ENCODE measurements at regions of chr6 and their contacts with region 1.

Region 1: GRCh38 chr6:27295301-27296081 is 16.6 kb downstream of the POM121L2 start:
- DNase-seq: no peak
- ATAC-seq: no peak
- H3K4me3 Mint-ChIP-seq: no peak overlapping the region
- H3K27ac Mint-ChIP-seq: no peak overlapping the region
- H3K4me1 Mint-ChIP-seq: peaks cover 11% of the 10 kb centered on the region
- H3K27me3 Mint-ChIP-seq: peaks cover 72% of the 10 kb centered on the region

Region 2: DNA sequence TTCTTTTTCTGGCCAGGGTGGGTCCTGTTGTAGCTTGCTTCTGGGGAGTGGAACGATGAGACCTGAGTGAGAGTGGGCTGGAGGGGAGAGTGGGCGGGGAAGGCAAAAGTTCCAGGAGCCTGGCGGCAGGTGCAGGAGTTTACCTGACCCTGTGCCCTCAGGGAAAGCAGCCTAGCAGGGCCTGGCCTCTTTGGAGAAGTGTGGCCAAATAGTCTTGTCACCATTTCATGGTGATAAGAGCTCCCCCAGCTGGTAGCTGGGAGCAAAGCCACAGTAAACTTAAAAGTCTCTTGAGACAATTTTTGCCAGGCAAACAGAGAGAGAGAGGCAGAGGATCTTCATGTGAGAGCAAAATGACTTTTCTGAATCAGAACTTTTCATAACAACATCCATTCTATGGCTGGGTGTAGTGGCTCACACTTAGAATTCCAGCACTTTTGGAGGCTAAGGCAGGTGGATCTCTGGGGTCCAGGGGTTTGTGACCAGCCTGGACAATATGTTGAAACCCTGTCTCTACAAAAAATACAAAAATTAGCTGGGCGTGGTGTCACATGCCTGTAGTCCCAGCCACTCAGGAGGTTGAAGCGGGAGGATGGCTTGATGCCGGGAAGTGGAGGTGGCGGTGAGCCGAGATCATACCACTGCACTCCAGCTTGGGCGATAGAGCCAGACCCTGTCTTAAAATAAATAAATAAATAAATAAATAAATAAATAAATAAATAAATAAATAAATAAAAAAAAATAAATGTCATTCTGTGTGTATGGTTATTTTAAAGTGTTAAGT is 1805.3 kb before region 1 on chr6:
- CTCF ChIA-PET with region 1: no interaction called
- POLR2A ChIA-PET with region 1: no interaction called
- intact Hi-C with region 1: no loop called
- DNase-seq: peak; percentile 81
- ATAC-seq: peak; percentile 86
- H3K4me3 Mint-ChIP-seq: no peak overlapping the region
- H3K27ac Mint-ChIP-seq: no peak overlapping the region
- H3K4me1 Mint-ChIP-seq: peaks cover 4% of the 10 kb centered on the region
- H3K27me3 Mint-ChIP-seq: no peaks in the 10 kb centered on the region

Region 3: DNA sequence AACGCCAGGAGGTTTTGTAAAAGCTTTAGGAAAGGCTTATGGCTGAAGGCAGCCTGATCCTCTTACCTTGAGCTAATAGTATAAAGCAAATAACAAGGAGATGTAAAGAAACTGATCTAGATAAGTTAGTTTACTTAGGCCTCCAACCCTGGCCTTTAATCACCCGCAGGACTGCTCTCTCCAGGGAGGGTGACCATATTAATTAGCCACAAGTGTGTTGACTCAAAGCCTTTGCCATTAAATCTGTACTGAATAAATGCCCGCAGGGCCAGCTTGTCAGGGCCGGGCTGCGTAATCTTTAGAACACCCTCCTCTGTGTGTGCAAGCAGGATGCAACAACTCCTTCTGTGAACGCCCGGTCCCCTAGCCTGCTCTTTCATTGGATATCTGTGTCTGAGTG is 54.0 kb before region 1 on chr6:
- CTCF ChIA-PET with region 1: no interaction called
- POLR2A ChIA-PET with region 1: no interaction called
- intact Hi-C with region 1: no loop called
- DNase-seq: no peak
- ATAC-seq: no peak
- H3K4me3 Mint-ChIP-seq: no peak overlapping the region
- H3K27ac Mint-ChIP-seq: no peak overlapping the region
- H3K4me1 Mint-ChIP-seq: peaks cover 17% of the 10 kb centered on the region
- H3K27me3 Mint-ChIP-seq: peaks cover 55% of the 10 kb centered on the region

Region 4: DNA sequence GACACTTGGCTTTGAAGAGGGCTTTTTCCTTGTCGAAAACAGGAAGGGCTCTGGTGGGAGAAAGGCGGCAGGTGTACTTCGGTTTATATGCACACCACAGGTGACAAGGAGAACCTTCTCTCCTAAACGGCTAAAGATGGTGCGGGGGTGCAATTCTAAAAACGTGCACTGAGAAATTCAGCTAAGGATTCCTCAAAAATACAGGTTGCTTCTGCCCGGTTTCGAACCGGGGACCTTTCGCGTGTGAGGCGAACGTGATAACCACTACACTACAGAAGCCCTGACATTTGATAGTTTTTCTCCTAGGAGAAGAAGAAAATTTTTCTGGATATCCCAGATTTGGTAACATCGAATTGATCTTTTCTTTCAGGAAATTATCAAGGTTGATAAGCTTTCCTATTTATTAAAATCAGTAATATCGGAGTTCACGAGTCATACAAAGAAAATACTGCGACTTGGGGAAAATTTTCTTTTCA is 15.4 kb before region 1 on chr6:
- CTCF ChIA-PET with region 1: no interaction called
- POLR2A ChIA-PET with region 1: no interaction called
- intact Hi-C with region 1: loop called (anchors 1 to 2 kb)
- DNase-seq: peak; percentile 64
- ATAC-seq: peak; percentile 36
- H3K4me3 Mint-ChIP-seq: peak overlapping the region; percentile 58
- H3K27ac Mint-ChIP-seq: peak overlapping the region; percentile 13
- H3K4me1 Mint-ChIP-seq: peaks cover 10% of the 10 kb centered on the region
- H3K27me3 Mint-ChIP-seq: peaks cover 71% of the 10 kb centered on the region

Region 5: DNA sequence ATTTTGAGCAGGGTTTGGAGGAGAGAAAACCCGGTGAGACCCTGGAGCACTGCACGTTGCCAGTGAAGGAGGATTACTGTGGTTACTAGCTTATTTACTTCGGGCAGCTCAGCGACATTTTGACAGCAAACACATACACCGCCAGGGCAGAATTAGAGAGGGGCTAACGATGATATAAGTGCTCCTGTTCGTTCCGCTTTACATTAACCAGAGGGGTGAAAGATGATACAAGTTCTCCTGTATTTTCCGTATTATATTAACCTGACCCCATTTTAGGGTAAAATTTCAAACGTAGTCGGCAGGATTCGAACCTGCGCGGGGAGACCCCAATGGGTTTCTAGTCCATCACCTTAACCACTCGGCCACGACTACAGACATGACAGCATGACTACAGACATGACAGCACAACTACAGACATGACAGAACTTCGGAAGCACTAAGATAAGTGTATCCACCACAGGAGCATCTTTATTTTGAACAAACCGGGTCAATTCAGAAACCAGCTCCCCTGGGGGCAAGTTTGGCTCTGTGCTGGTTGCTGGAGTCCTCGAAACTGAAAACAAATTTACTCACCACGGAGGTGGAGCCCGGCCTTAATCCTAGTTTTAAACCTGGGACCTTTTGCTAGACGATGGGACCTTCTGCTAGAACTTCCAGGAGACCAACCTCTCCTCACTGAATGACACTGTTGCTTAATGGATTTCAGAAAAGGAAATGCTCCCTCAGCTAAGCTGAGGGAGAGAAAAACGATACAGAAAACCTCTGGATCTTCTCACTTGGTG is 257.8 kb after region 1 on chr6:
- CTCF ChIA-PET with region 1: no interaction called
- POLR2A ChIA-PET with region 1: no interaction called
- intact Hi-C with region 1: loop called (anchors 5 kb)
- DNase-seq: peak; percentile 61
- ATAC-seq: peak; percentile 83
- H3K4me3 Mint-ChIP-seq: peak overlapping the region; percentile 29
- H3K27ac Mint-ChIP-seq: no peak overlapping the region
- H3K4me1 Mint-ChIP-seq: peaks cover 5% of the 10 kb centered on the region
- H3K27me3 Mint-ChIP-seq: peaks cover 58% of the 10 kb centered on the region

Region 6: DNA sequence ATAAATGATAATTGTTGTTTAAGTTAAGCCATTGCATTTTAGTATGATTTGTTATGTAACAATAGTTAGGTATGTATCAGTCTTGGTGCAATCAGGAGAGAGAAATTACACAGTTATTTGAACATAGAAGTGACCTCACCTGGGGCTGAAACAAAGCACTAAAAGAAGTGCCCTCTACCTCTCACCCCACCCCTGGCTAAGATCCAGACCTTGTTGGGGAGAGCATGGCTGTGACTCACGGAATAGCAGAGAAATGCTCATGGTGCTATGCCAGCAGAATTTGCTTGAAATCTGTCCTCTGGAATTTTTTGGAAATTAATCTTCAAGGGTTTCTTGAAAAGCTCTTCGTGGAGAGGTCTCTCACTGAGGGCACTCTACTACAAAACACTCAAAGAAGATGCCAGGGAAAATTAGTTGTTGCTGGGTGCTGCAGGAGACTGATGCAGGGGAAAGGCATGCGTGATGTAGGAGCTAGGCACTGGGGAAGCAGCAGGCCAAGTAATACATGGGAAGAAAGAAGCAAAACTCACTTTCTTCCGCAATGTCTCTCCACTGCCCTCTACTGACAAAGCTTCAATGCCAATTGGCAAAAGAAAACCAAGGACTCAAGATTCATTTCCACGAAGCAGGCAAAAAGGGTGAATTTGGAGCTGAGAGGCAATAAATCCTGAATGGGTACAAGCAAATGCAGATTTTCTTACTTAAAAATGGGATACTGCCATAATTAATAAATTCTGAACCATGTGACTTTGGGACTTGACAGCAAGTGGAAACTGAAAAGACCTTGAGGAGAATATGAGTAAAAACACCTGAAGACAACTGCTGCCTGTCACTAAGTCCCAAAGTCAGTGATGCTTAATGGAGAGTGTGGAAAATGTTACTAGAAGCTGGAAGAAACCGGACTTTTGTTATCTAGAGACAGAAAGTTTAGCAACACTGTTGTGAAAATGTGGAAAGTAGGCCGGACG is 313.7 kb after region 1 on chr6:
- CTCF ChIA-PET with region 1: no interaction called
- POLR2A ChIA-PET with region 1: no interaction called
- intact Hi-C with region 1: no loop called
- DNase-seq: no peak
- ATAC-seq: no peak
- H3K4me3 Mint-ChIP-seq: no peak overlapping the region
- H3K27ac Mint-ChIP-seq: no peak overlapping the region
- H3K4me1 Mint-ChIP-seq: peaks cover 13% of the 10 kb centered on the region
- H3K27me3 Mint-ChIP-seq: peaks cover 46% of the 10 kb centered on the region

Region 7: GRCh38 chr6:28725890-28726348 is 1430.4 kb after region 1 on chr6:
- CTCF ChIA-PET with region 1: no interaction called
- POLR2A ChIA-PET with region 1: no interaction called
- intact Hi-C with region 1: loop called in 1 of 2 experiments (anchors 10 kb)
- DNase-seq: peak; percentile 22
- ATAC-seq: no peak
- H3K4me3 Mint-ChIP-seq: no peak overlapping the region
- H3K27ac Mint-ChIP-seq: no peak overlapping the region
- H3K4me1 Mint-ChIP-seq: peaks cover 11% of the 10 kb centered on the region
- H3K27me3 Mint-ChIP-seq: peaks cover 58% of the 10 kb centered on the region

Measured in activated CD4-positive, alpha-beta T cell treated with anti-CD3 and anti-CD28 coated beads for 36 hours (primary cell).